Activated CD4-positive, alpha-beta T cell treated with anti-CD3 and anti-CD28 coated beads for 36 hours (primary cell): ENCODE measurements at regions of chrX and their contacts with region 1.

Region 1: GRCh38 chrX:47144626-47145394 is at the starts of genes NDUFB11 and RBM10:
- DNase-seq: peak; percentile 94
- ATAC-seq: peak; percentile 93
- H3K4me3 Mint-ChIP-seq: peak within 1 kb of the TSS; percentile 98
- H3K27ac Mint-ChIP-seq: peak within 1 kb of the TSS; percentile 100
- H3K4me1 Mint-ChIP-seq: peaks cover 24% of the 10 kb centered on the region
- H3K27me3 Mint-ChIP-seq: no peaks in the 10 kb centered on the region
- total RNA-seq, gene NDUFB11: 89.9 to 90.8 TPM
- total RNA-seq, gene RBM10: 63.8 to 72.1 TPM

Region 2: GRCh38 chrX:47129157-47129898 is 15.5 kb before region 1 on chrX:
- CTCF ChIA-PET with region 1: interaction called, 11 read pairs
- POLR2A ChIA-PET with region 1: interaction called, 8 read pairs
- intact Hi-C with region 1: loop called (anchors 1 kb)
- DNase-seq: peak; percentile 91
- ATAC-seq: peak; percentile 100
- H3K4me3 Mint-ChIP-seq: peak overlapping the region; percentile 89
- H3K27ac Mint-ChIP-seq: peak overlapping the region; percentile 99
- H3K4me1 Mint-ChIP-seq: peaks cover 6% of the 10 kb centered on the region
- H3K27me3 Mint-ChIP-seq: no peaks in the 10 kb centered on the region

Region 3: GRCh38 chrX:47233337-47234113 is 88.7 kb after region 1 on chrX:
- CTCF ChIA-PET with region 1: no interaction called
- POLR2A ChIA-PET with region 1: no interaction called
- intact Hi-C with region 1: loop called in 1 of 2 experiments (anchors 1 kb)
- DNase-seq: peak; percentile 96
- ATAC-seq: peak; percentile 89
- H3K4me3 Mint-ChIP-seq: peak overlapping the region; percentile 77
- H3K27ac Mint-ChIP-seq: peak overlapping the region; percentile 95
- H3K4me1 Mint-ChIP-seq: peaks cover 23% of the 10 kb centered on the region
- H3K27me3 Mint-ChIP-seq: no peaks in the 10 kb centered on the region

Region 4: DNA sequence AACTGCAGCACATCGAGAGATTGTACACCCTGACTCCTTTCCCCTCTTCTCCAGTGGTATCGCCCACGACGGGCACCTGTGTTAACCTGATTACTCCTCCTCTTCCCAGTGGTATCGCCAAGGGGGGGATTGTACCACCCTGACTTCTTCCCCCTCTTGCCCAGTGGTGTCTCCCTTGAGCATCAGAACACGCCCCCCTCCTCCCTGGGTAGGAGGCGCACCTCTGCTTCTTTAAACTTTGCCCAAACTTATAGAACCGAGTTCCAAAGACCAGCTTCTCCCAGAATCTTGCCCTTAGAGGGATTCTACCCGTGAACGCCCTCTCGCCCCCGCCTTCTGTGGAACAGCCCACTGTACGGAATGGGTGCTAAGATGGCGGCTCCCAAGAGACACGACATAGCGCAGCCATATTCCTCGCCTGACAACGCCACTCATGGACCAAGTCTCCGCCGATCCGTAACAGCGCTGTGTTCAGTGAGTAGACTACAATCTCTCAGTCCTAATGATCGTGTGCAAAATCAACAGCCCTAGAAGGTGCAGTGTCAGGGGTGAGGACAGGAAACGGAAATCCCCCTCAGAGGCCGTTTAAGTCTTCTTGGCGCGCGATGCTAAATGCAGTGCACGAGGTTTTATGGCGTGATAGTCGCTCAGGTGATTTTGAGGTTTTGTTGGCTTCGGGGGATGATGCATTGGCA is 221.4 kb after region 1 on chrX:
- CTCF ChIA-PET with region 1: no interaction called
- POLR2A ChIA-PET with region 1: no interaction called
- intact Hi-C with region 1: loop called in 1 of 2 experiments (anchors 1 kb)
- DNase-seq: peak; percentile 80
- ATAC-seq: peak; percentile 94
- H3K4me3 Mint-ChIP-seq: peak overlapping the region; percentile 80
- H3K27ac Mint-ChIP-seq: peak overlapping the region; percentile 93
- H3K4me1 Mint-ChIP-seq: peaks cover 15% of the 10 kb centered on the region
- H3K27me3 Mint-ChIP-seq: no peaks in the 10 kb centered on the region

Region 5: GRCh38 chrX:47430925-47431324 is 286.1 kb after region 1 on chrX:
- CTCF ChIA-PET with region 1: no interaction called
- POLR2A ChIA-PET with region 1: no interaction called
- intact Hi-C with region 1: no loop called
- DNase-seq: no peak
- ATAC-seq: no peak
- H3K4me3 Mint-ChIP-seq: no peak overlapping the region
- H3K27ac Mint-ChIP-seq: no peak overlapping the region
- H3K4me1 Mint-ChIP-seq: no peaks in the 10 kb centered on the region
- H3K27me3 Mint-ChIP-seq: no peaks in the 10 kb centered on the region

Region 6: GRCh38 chrX:47650164-47651042 is 505.6 kb after region 1 on chrX and contains the start of gene ELK1:
- CTCF ChIA-PET with region 1: no interaction called
- POLR2A ChIA-PET with region 1: no interaction called
- intact Hi-C with region 1: loop called in 1 of 2 experiments (anchors 10 kb)
- DNase-seq: peak; percentile 93
- ATAC-seq: peak; percentile 95
- H3K4me3 Mint-ChIP-seq: peak within 1 kb of the TSS; percentile 92
- H3K27ac Mint-ChIP-seq: peak within 1 kb of the TSS; percentile 97
- H3K4me1 Mint-ChIP-seq: peaks cover 44% of the 10 kb centered on the region
- H3K27me3 Mint-ChIP-seq: no peaks in the 10 kb centered on the region
- total RNA-seq, gene ELK1: 96.8 to 117 TPM

Region 7: DNA sequence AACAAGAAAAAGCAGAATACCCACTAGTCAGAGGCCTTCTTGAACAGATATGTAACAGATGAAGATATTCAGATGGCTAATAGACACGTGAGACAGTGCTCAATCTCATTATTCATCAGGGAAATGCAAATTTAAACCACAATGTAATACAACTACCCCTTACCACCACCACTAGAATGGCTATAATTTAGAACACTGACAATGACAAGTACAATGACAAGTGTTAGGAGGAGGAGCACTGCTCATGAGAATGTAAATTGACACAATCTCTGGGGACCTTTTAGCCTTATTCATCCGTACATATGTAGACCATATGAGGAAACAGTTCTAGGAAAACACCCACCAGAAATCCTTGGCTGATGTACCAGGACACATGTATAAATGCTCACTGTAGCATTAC is 705.0 kb after region 1 on chrX:
- CTCF ChIA-PET with region 1: no interaction called
- POLR2A ChIA-PET with region 1: no interaction called
- intact Hi-C with region 1: no loop called
- DNase-seq: no peak
- ATAC-seq: no peak
- H3K4me3 Mint-ChIP-seq: no peak overlapping the region
- H3K27ac Mint-ChIP-seq: no peak overlapping the region
- H3K4me1 Mint-ChIP-seq: peaks cover 7% of the 10 kb centered on the region
- H3K27me3 Mint-ChIP-seq: no peaks in the 10 kb centered on the region